ENCODE measurements at regions of chr13 and their contacts with region 1.

Region 1: DNA sequence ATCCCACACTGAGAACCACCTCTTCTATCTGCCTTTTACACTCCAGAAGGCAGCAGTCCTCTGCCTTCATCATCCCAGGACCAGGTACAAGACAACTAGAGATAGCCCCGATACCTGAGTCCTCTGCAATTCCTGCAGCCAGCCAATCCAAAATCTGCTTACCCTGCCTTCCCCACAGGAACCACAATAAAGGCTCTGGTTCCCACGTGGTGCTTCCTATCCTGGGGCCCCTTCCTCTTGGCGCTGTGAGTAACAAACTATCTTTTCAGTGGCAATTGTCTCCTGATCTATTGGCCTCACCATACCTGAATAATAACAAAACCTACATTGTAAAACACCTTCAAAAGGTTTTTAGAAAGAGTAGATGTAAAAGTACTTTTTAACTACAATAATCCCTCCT is 63.1 kb downstream of the ZDHHC20 start:
- DNase-seq: no peak
- H3K4me3 ChIP-seq: no peak overlapping the region
- H3K27ac ChIP-seq: no peak overlapping the region
- H3K4me1 ChIP-seq: no peaks in the 10 kb centered on the region
- H3K27me3 ChIP-seq: no peaks in the 10 kb centered on the region
- CTCF ChIP-seq: no peak

Region 2: DNA sequence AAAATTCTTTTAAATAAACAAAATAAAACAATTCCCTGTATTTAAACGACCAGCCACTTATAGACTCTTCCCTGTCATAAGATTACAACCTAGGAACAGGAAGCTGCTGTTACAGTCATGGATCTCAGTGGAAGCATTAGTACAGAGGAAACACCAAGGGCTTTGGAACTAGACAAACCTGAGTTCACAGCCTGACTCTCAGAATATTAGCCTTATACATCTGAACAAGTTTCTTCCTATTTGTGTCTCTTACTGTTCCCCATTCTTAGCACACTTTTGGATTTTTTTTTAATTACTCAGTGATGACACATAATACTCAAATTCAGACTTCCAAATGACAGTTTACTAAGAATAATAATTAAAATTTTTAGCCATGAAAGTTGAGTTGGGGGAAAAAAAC is 17.1 kb after region 1 on chr13:
- CTCF ChIA-PET with region 1: no interaction called
- dilution Hi-C with region 1: no loop called
- in situ Hi-C with region 1: no loop called
- intact Hi-C with region 1: loop called (anchors 2 kb)
- DNase-seq: peak; percentile 36
- H3K4me3 ChIP-seq: no peak overlapping the region
- H3K27ac ChIP-seq: peak overlapping the region; percentile 15
- H3K4me1 ChIP-seq: peaks cover 3% of the 10 kb centered on the region
- H3K27me3 ChIP-seq: no peaks in the 10 kb centered on the region
- CTCF ChIP-seq: no peak

Region 3: GRCh38 chr13:21638319-21639282 is 242.6 kb after region 1 on chr13:
- CTCF ChIA-PET with region 1: no interaction called
- dilution Hi-C with region 1: no loop called
- in situ Hi-C with region 1: no loop called
- intact Hi-C with region 1: no loop called
- DNase-seq: peak; percentile 75
- H3K4me3 ChIP-seq: no peak overlapping the region
- H3K27ac ChIP-seq: peak overlapping the region; percentile 55
- H3K4me1 ChIP-seq: peaks cover 26% of the 10 kb centered on the region
- H3K27me3 ChIP-seq: no peaks in the 10 kb centered on the region
- CTCF ChIP-seq: peak; percentile 61 to 62